ENCODE measurements at regions of chr21 and their contacts with region 1.

Region 1: GRCh38 chr21:44873356-44874239 is at the start of gene PTTG1IP:
- DNase-seq: peak; percentile 97 to 98
- H3K4me3 ChIP-seq: peak within 1 kb of the TSS; percentile 87 to 95 (median 91)
- H3K27ac ChIP-seq: peak within 1 kb of the TSS; percentile 91
- H3K4me1 ChIP-seq: peaks cover 14 to 28% of the 10 kb centered on the region in 2 donors
- H3K27me3 ChIP-seq: no peaks in the 10 kb centered on the region
- CTCF ChIP-seq: no peak
- POLR2A ChIP-seq: peak; percentile 47
- total RNA-seq, gene PTTG1IP: 187 to 351 (median 272) TPM

Region 2: DNA sequence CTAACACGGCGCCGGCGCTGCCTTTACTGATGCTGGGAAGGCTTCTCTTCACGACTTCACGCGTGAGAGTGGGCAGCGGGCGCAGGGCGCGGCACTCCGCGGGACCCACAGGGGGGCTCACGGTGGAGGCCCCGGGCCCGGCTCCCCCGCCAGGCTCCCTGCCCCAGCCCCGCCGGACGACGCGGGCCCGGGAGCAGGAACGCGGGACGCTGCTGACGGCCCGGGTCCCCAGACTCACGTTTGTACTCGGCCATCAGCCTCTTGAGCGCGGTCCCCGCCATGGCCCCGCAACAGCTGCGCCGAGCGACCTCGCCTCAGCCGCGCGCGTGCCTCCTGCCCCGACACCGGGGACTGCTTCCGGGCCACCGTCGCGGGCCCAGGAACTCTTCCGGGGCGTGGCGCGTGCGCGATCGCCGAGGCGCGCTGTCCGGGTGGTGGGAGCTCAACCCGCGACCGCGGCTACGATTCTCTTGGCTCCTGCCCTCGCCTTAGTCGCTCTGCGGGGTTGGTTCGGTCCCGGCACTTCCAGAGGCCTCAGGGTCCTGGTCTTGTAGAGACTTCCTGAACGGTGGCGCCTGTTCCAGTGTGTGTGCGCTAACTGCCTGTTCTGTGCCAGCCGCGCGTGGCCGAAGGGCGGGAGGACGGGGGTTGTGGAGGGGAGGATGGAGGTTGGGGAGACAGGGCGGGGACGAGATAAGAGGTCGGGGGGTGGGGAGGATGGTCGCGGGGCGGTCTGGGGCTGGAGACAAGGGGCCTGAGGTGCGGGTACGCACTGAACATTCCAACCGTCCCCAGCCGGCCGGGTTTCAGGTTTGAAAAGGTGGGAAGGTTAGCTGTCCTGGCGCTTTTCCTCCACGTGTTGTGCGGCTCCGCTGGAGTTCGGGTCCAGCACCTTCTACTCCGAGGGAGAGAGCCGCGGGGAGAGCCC is 71.9 kb before region 1 on chr21 and contains the start of gene UBE2G2:
- intact Hi-C with region 1: loop called (anchors 5 kb)
- DNase-seq: peak; percentile 70 to 76
- H3K4me3 ChIP-seq: peak within 1 kb of the TSS; percentile 80 to 93 (median 86)
- H3K27ac ChIP-seq: peak within 1 kb of the TSS; percentile 60 to 73
- H3K4me1 ChIP-seq: peaks cover 0 to 6% of the 10 kb centered on the region in 2 donors
- H3K27me3 ChIP-seq: no peaks in the 10 kb centered on the region
- CTCF ChIP-seq: no peak
- POLR2A ChIP-seq: no peak
- total RNA-seq, gene UBE2G2: 84.8 to 128 (median 99.2) TPM

Region 3: DNA sequence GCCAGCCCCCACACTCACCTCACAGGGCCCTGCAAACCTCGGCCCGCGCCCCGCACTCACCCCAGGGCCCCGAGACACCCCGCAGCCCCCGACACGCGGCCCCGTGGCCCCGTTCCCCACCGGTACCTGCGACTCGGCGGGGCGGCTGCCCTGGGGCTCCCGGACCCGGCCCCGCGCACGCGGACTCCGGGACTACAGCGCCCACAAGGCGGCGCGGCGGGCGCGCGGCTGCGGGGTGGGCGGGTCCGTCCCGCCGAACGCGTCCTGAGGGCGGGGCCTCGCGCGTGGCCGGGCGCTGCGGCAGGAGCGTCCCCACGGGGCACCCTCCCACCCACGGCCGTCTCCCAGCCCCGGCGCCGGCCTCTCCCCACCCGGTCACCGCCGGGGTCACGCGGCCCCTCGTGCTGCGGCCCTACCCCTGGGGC is 668.7 kb after region 1 on chr21 and contains the start of gene SLC19A1:
- intact Hi-C with region 1: loop called (anchors 10 kb)
- DNase-seq: peak; percentile 24 to 63
- H3K4me3 ChIP-seq: peak within 1 kb of the TSS; percentile 62 to 97 (median 75)
- H3K27ac ChIP-seq: peak within 1 kb of the TSS; percentile 78 to 91
- H3K4me1 ChIP-seq: peaks cover 4 to 6% of the 10 kb centered on the region in 2 donors
- H3K27me3 ChIP-seq: no peaks in the 10 kb centered on the region
- CTCF ChIP-seq: peak in 1 of 3 donors; percentile 49
- POLR2A ChIP-seq: no peak
- total RNA-seq, gene SLC19A1: 5.6 to 6.7 (median 6.6) TPM

Measured in breast epithelium (tissue), 4 donors.